MCF 10A (cell line): ENCODE measurements at regions of chr3 and their contacts with region 1.

Region 1: DNA sequence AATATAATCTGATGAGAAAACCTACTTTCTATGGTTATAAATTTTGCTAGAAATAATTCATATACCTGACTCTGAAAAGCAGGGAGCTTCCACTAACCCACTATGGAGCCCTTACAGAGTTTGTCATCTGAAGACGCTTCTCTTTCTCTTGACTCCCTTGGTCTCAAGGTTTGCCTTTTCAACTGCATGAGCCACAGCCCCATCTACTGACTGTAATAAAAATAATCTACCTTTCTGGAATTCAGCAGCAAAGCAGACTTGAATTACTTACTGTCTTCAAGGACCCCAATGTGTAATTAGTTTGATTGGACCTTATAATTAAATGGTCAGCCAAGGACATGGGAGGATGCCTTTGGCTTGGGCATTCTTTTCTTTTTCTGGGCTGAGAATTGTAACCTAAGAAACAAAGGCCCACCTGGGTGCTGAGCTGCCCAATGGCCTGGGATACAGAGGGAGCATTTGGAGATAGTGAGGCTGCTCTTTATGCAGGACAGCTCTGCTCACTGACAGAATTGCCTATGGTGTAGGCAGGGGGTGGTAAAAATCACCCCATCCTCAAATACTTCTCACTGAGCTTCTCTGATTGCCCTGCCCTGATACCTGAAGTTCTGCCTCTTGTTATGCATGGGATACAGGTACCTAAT is 178.6 kb upstream of the TRIM42 start:
- DNase-seq: peak; percentile 16
- H3K4me3 Mint-ChIP-seq: no peak overlapping the region
- H3K27ac Mint-ChIP-seq: no peak overlapping the region
- H3K4me1 Mint-ChIP-seq: peaks cover 5% of the 10 kb centered on the region
- H3K27me3 Mint-ChIP-seq: no peaks in the 10 kb centered on the region
- CTCF ChIP-seq: peak; percentile 45

Region 2: GRCh38 chr3:139935016-139935865 is 564.0 kb before region 1 on chr3 and contains the start of gene CLSTN2:
- CTCF ChIA-PET with region 1: interaction called, 9 read pairs
- POLR2A ChIA-PET with region 1: no interaction called
- intact Hi-C with region 1: loop called (anchors 1 kb)
- DNase-seq: no peak
- H3K4me3 Mint-ChIP-seq: no peak within 1 kb of the TSS
- H3K27ac Mint-ChIP-seq: no peak within 1 kb of the TSS
- H3K4me1 Mint-ChIP-seq: no peaks in the 10 kb centered on the region
- H3K27me3 Mint-ChIP-seq: peaks cover 30% of the 10 kb centered on the region
- CTCF ChIP-seq: no peak
- total RNA-seq, gene CLSTN2: not detected in 2 replicates

Region 3: GRCh38 chr3:140128631-140129030 is 370.6 kb before region 1 on chr3:
- CTCF ChIA-PET with region 1: interaction called, 3 read pairs
- POLR2A ChIA-PET with region 1: no interaction called
- intact Hi-C with region 1: loop called (anchors 1 kb)
- DNase-seq: peak; percentile 56
- H3K4me3 Mint-ChIP-seq: no peak overlapping the region
- H3K27ac Mint-ChIP-seq: no peak overlapping the region
- H3K4me1 Mint-ChIP-seq: no peaks in the 10 kb centered on the region
- H3K27me3 Mint-ChIP-seq: no peaks in the 10 kb centered on the region
- CTCF ChIP-seq: peak; percentile 26

Region 4: GRCh38 chr3:140276703-140277102 is 222.5 kb before region 1 on chr3:
- CTCF ChIA-PET with region 1: no interaction called
- POLR2A ChIA-PET with region 1: no interaction called
- intact Hi-C with region 1: loop called (anchors 1 kb)
- DNase-seq: peak; percentile 14
- H3K4me3 Mint-ChIP-seq: no peak overlapping the region
- H3K27ac Mint-ChIP-seq: no peak overlapping the region
- H3K4me1 Mint-ChIP-seq: no peaks in the 10 kb centered on the region
- H3K27me3 Mint-ChIP-seq: peaks cover 36% of the 10 kb centered on the region
- CTCF ChIP-seq: no peak

Region 5: GRCh38 chr3:140363801-140364200 is 135.4 kb before region 1 on chr3:
- CTCF ChIA-PET with region 1: interaction called, 3 read pairs
- POLR2A ChIA-PET with region 1: no interaction called
- intact Hi-C with region 1: loop called (anchors 1 kb)
- DNase-seq: peak; percentile 47
- H3K4me3 Mint-ChIP-seq: no peak overlapping the region
- H3K27ac Mint-ChIP-seq: no peak overlapping the region
- H3K4me1 Mint-ChIP-seq: no peaks in the 10 kb centered on the region
- H3K27me3 Mint-ChIP-seq: peaks cover 28% of the 10 kb centered on the region
- CTCF ChIP-seq: no peak

Region 6: GRCh38 chr3:140416666-140417065 is 82.6 kb before region 1 on chr3:
- CTCF ChIA-PET with region 1: no interaction called
- POLR2A ChIA-PET with region 1: no interaction called
- intact Hi-C with region 1: no loop called
- DNase-seq: no peak
- H3K4me3 Mint-ChIP-seq: no peak overlapping the region
- H3K27ac Mint-ChIP-seq: no peak overlapping the region
- H3K4me1 Mint-ChIP-seq: peaks cover 3% of the 10 kb centered on the region
- H3K27me3 Mint-ChIP-seq: no peaks in the 10 kb centered on the region
- CTCF ChIP-seq: no peak